ENCODE measurements at regions of chr7 and their contacts with region 1.

Region 1: DNA sequence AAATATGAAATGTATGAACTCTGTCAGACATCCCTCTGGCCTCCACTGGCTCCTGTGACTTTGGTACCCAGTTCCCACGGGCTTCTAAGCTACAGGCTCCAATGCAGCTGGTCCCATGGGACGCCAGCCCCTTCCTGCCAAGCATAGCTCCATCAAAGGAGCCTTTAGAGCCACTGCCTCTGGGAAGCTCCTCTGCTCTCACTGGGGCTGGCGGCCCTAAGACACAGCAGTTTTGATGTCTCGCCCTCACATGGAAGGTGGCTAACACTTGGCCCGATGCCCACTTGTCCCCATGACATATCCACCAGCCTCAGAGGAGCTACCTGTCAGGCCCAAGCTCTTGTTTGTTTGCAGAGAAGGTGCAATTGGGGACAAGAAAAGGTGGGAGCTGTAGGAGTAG is 453.7 kb upstream of the LRRN3 start:
- DNase-seq: no peak
- ATAC-seq: no peak
- H3K4me3 ChIP-seq: no peak overlapping the region
- H3K4me3 Mint-ChIP-seq: no peak overlapping the region
- H3K27ac ChIP-seq: no peak overlapping the region
- H3K27ac Mint-ChIP-seq: no peak overlapping the region
- H3K4me1 ChIP-seq: no peaks in the 10 kb centered on the region
- H3K4me1 Mint-ChIP-seq: no peaks in the 10 kb centered on the region
- H3K27me3 ChIP-seq: no peaks in the 10 kb centered on the region
- H3K27me3 Mint-ChIP-seq: peaks cover 0 to 5% of the 10 kb centered on the region in 2 donors

Region 2: DNA sequence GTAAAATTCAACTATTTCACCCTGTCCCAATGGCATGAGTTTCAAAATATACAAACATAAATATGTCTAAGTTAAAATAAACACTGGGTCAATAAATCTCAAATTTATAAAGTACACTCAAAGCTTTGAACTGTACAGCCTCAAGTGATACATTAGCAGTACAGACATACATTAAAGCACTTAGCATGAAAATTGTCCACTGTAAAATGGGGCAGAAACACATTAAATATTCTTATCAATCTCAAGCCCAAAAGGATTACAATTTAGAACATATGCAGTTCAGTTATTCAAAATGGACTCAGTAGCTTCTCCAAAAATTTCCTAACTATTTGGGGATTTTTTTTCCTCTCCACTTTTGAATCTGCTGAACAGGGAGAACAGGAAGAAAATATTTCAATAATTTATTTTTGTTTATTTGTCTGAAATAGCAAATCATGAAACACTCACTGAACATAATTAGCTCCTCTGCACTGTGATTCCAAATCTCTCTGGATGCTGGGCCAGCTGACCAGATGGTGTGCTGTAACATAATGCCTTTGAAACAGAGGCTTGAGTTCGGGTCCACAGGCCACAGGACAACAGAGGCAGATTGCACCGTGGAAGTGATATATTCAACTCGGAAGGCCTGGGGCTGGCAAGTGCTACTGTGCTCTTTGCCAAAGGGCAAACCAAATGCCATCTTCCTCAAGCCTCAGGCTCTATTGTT is 204.7 kb after region 1 on chr7:
- CTCF ChIA-PET with region 1: no interaction called
- POLR2A ChIA-PET with region 1: no interaction called
- DNase-seq: no peak
- ATAC-seq: no peak
- H3K4me3 ChIP-seq: no peak overlapping the region
- H3K4me3 Mint-ChIP-seq: no peak overlapping the region
- H3K27ac ChIP-seq: no peak overlapping the region
- H3K27ac Mint-ChIP-seq: no peak overlapping the region
- H3K4me1 ChIP-seq: no peaks in the 10 kb centered on the region
- H3K4me1 Mint-ChIP-seq: no peaks in the 10 kb centered on the region
- H3K27me3 ChIP-seq: no peaks in the 10 kb centered on the region
- H3K27me3 Mint-ChIP-seq: no peaks in the 10 kb centered on the region

Region 3: DNA sequence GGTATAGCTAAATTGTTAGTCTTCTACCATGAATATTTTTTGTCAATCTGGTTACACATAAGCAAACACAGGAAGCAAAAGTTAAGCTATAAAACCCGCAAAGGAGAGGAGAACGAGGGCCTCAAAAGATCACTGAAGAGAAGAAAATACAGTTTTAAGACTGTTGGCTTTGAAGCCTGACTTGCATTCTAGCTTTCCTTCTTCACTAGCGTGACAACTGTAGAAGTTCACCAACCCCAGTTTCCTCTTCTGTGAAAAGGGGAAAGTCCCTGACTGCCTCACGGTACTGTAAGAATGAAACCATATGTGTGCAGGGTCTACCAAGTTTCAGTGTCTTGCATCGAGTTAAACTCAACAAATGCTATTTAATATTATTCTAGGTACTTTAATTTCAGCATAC is 446.2 kb after region 1 on chr7:
- CTCF ChIA-PET with region 1: interaction called in 1 of 2 experiments, 15 read pairs
- POLR2A ChIA-PET with region 1: no interaction called
- DNase-seq: peak in 31 of 35 experiments; percentile 3 to 88 (median 40)
- ATAC-seq: peak; percentile 95 to 98 (median 96)
- H3K4me3 ChIP-seq: peak overlapping the region in 1 of 2 donors; percentile 25
- H3K4me3 Mint-ChIP-seq: peak overlapping the region; percentile 32 to 64 (median 60)
- H3K27ac ChIP-seq: peak overlapping the region; percentile 62
- H3K27ac Mint-ChIP-seq: peak overlapping the region; percentile 92 to 96
- H3K4me1 ChIP-seq: peaks cover 15 to 68% of the 10 kb centered on the region in 2 experiments
- H3K4me1 Mint-ChIP-seq: peaks cover 55 to 69% (median 67%) of the 10 kb centered on the region in 3 donors
- H3K27me3 ChIP-seq: no peaks in the 10 kb centered on the region
- H3K27me3 Mint-ChIP-seq: no peaks in the 10 kb centered on the region

Measured in T-cell (primary cell).